ENCODE measurements at regions of chr3 and their contacts with region 1.

Region 1: DNA sequence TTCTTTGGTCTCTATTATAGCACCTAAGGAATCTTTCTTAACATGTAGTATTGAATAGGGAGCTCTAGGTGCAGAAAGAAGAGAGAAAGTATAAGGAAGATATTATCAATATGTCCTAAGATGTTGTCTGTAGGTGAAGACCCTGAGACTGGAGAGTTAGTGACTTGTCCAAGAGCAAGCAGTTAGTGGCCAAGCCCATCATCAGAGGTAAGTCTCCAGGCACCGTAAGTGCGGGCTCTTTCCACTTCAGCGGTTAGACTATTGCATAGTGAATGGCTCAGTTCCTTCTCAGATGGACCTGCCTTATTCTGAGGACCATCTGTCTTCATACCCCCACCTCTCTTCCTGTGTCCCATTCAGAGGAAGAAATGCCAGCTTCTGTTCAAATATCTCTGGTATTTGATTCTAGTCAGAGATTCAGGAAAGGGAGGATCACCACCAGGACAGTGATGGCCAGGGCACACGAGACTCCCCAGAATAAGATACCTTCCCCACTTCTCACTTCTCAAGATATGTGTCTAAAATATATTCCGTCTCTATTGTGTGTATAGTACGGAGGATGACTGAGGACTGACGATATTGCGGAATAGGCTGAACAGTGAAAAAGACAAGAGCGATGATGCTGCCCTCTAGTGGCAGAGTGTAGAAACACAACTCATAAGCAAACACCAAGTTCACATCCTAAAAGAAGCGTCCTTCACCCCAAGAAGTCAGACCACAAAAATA is 19.1 kb upstream of the ADGRG7 start:
- DNase-seq: peak; percentile 54 to 68
- H3K4me3 ChIP-seq: no peak overlapping the region
- H3K4me1 ChIP-seq: no peaks in the 10 kb centered on the region
- H3K27me3 ChIP-seq: no peaks in the 10 kb centered on the region

Region 2: DNA sequence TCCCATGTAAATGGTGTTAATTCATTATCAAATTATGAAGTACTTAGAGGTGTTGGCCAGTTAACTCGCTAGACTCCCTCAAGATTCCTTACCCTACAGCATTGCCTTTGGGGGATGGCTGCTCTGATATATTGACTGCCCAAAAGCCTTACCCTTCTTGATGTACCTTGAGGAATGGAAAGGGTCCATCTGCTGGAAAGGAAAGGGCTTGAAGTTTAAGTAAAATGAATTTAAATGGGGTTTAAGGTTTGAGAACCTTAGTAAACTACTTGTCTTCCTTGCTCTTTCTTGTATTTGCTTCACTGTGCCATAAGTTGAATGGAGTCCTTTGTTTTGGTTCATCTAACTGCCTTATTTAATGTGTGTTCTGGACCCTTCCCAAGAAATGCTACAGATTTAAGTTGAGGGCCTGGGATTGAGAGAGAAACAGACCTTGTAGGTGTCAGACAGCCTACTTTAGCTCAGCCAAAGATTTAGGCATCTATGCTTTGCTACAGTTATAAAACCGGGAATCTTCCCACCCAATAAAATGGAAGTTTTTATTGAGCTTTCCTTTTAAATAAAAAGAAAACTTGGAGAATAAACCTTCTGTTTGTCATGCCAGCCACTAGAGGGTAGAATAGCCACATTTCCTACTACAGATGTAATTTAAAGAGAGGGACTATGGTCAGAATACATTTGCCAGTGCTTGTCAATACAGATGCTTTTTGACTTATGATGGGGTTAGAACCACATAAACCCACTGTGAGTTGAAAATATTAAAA is 747.3 kb before region 1 on chr3:
- in situ Hi-C with region 1: loop called (anchors 25 kb)
- DNase-seq: peak in 1 of 2 experiments; percentile 60
- H3K4me3 ChIP-seq: no peak overlapping the region
- H3K4me1 ChIP-seq: peaks cover 4% of the 10 kb centered on the region
- H3K27me3 ChIP-seq: no peaks in the 10 kb centered on the region

Region 3: GRCh38 chr3:100316641-100317069 is 273.6 kb before region 1 on chr3:
- in situ Hi-C with region 1: loop called (anchors 25 kb)
- DNase-seq: peak; percentile 33 to 61
- H3K4me3 ChIP-seq: no peak overlapping the region
- H3K4me1 ChIP-seq: peaks cover 4% of the 10 kb centered on the region; the same call in 1 of the 2 replicates
- H3K27me3 ChIP-seq: no peaks in the 10 kb centered on the region

Region 4: GRCh38 chr3:100463002-100463401 is 127.3 kb before region 1 on chr3:
- in situ Hi-C with region 1: loop called (anchors 5 kb)
- DNase-seq: peak; percentile 48 to 73
- H3K4me3 ChIP-seq: no peak overlapping the region
- H3K4me1 ChIP-seq: no peaks in the 10 kb centered on the region
- H3K27me3 ChIP-seq: no peaks in the 10 kb centered on the region